Left cardiac atrium (tissue), 4 donors: ENCODE measurements at regions of chr9 and their contacts with region 1.

Region 1: GRCh38 chr9:35660966-35661415 is 2.9 kb downstream of the CCDC107 start:
- DNase-seq: no peak
- ATAC-seq: no peak

Region 2: GRCh38 chr9:35566417-35566816 is 94.6 kb before region 1 on chr9:
- intact Hi-C with region 1: no loop called
- DNase-seq: no peak
- ATAC-seq: no peak

Region 3: DNA sequence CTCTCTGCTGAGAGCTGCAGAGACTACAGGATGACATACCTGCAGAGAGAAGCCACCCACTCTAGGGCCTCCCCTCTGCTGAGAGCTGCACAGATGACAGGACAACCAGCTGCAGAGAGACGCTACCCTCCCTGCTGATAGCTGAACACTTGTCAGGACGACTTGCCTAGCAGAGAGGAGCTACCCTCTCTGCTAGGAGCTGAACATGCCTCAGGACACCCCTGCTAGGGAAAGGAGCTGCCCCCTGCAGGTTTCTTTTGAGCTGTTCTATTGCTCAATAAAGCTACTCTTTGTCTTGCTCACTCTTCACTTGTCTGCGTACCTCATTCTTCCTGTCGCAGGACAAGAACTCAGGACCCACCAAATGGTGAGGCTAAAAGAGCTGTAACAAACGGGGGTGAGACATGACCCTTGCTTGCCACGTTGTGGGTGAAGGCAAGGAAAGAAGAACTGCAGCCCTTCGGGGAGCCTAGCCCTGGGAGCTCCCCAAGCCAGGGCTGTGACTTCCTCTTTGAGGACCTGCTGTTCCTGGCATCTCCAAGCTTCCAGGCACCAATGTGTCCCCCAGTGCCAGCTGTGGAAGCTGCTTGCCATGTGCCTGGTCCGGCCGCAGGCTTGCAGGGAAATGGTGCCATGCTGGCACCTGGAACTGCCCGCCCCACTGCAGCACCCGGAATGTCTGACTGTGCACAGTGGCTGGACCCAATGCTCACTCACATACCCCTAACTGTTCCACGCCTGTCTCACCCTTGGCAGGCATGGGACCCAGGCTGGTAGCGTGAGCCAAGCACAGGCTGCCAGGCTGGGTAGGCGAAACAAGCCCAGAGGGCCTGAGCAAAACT is 61.0 kb before region 1 on chr9:
- intact Hi-C with region 1: no loop called
- DNase-seq: no peak
- ATAC-seq: peak in 1 of 2 donors; percentile 3

Region 4: DNA sequence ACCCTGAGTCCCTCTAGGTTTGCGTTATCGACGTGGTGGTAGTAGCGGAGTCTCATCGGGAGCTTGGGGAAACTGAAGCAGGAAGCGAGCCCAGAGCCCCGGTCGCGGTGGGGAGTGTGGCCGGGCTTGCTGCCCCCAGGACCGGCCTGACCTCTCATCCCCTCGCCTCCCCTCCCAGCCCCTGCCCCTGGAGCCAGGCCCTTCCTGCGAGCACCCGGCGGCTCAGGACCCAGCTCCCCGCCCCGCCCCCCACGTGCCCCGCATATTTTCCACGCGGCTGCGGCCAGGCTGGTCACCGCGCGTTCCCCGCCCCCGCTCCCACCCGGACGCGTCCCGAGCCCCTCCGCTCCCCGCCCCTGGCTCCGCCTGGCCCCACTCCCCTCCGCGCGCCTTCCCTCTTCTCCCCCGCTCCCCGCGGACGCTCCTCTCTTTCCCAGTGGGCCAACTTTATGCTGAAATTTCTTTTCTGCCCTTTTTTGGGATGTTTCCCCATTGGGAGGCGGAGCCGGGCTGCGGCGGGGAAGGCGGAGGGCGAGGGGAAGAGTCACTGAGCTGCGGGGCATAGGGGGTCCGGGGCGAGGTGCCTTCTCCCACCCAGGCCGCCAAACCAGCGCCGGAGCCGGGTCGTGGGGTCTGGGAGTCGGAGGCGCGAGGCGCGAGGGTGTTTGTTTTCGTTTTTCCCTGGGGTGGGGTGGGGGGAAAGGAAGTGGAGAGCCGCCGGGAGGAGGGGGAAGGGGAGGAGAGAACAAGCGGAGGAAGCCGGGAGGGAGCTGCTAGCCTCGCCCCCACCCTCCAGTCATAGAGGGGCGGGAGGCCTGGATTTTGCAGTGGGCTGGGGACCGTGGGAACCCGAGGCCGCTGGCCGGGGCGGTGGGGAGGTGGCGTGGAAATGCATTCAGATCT is 29.7 kb after region 1 on chr9:
- intact Hi-C with region 1: loop called in 1 of 2 experiments (anchors 2 kb)
- DNase-seq: peak; percentile 85
- ATAC-seq: peak; percentile 69 to 71

Region 5: DNA sequence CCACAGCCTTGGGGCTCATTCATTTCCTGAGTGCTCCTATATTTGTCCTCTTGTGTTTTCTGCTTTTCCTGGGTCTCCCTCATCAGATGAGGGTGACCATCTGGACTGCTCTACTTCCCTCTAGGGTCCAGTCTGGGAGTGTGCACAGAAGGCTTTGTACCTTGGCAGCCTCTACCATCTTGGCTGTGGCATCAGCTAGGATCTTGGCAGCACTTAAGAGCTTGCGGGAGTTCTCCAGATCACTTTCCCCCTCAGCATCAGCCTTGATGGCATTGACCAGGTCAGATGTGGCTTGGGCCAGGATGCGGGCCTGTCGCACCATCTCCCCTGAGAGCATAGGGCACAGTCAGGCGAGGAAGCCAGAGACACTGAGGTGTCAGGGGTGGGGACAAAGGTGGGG is 55.2 kb after region 1 on chr9:
- intact Hi-C with region 1: no loop called
- DNase-seq: no peak
- ATAC-seq: peak in 1 of 2 donors; percentile 44

Region 6: DNA sequence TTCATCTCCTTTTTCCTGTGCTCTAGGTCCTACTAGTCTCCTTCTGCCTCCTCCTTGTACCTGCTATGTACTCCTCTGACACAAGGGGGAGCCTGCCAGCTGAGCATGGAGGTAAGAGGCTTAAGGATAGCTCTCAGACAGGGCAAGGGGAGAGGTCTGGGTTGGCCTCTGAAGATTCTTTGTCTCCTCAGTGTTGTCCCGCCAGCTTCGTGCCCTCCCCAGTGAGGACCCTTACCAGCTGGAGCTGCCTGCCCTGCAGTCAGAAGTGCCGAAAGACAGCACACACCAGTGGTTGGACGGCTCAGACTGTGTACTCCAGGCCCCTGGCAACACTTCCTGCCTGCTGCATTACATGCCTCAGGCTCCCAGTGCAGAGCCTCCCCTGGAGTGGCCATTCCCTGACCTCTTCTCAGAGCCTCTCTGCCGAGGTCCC is 75.2 kb after region 1 on chr9:
- intact Hi-C with region 1: no loop called
- DNase-seq: peak; percentile 73
- ATAC-seq: no peak